PC-3 (cell line): ENCODE measurements at regions of chr2 and their contacts with region 1.

Region 1: DNA sequence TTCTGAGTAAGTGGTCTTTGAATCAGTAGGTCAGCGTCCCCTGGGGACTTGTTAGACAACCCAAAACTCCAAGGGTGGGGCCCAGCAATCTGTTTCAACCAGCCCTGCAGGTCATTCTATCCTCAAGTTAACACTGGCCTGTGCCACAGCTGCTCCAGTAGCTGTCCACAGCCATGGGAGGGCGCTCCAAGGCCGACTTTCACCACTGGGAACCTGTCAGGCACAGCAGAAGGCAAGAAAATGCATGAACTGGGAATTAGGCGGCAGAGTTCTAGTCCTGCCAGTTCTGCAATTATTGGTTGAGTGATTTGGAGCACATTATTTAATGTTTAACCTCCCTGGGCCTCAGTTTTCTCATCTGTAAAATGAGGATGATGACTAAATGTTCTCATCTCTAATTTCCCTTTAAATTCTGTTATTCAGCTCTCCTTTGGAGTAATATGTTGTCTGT is 17.4 kb upstream of the MRPL33 start:
- DNase-seq: peak; percentile 89
- ATAC-seq: peak; percentile 99
- H3K4me3 ChIP-seq: no peak overlapping the region
- H3K27ac ChIP-seq: no peak overlapping the region
- H3K4me1 ChIP-seq: peaks cover 10% of the 10 kb centered on the region; the same call in 1 of the 2 replicates
- H3K27me3 ChIP-seq: no peaks in the 10 kb centered on the region
- CTCF ChIP-seq: peak; percentile 98

Region 2: GRCh38 chr2:28193627-28194403 is 439.7 kb after region 1 on chr2:
- CTCF ChIA-PET with region 1: no interaction called
- POLR2A ChIA-PET with region 1: interaction called, 27 read pairs
- intact Hi-C with region 1: no loop called
- DNase-seq: peak; percentile 13
- ATAC-seq: peak; percentile 42; the same call in 1 of the 2 replicates
- H3K4me3 ChIP-seq: no peak overlapping the region
- H3K27ac ChIP-seq: no peak overlapping the region
- H3K4me1 ChIP-seq: no peaks in the 10 kb centered on the region
- H3K27me3 ChIP-seq: no peaks in the 10 kb centered on the region
- CTCF ChIP-seq: no peak

Region 3: GRCh38 chr2:28233164-28233676 is 479.1 kb after region 1 on chr2:
- CTCF ChIA-PET with region 1: no interaction called
- POLR2A ChIA-PET with region 1: no interaction called
- intact Hi-C with region 1: no loop called
- DNase-seq: peak; percentile 44
- ATAC-seq: peak; percentile 84
- H3K4me3 ChIP-seq: no peak overlapping the region
- H3K27ac ChIP-seq: peak overlapping the region; percentile 52
- H3K4me1 ChIP-seq: peaks cover 16% of the 10 kb centered on the region
- H3K27me3 ChIP-seq: no peaks in the 10 kb centered on the region
- CTCF ChIP-seq: no peak